Mammary epithelial cell (primary cell): ENCODE measurements at regions of chr7 and their contacts with region 1.

Region 1: GRCh38 chr7:92245487-92246362 is at the starts of genes ANKIB1 and KRIT1:
- DNase-seq: peak; percentile 81
- H3K4me3 ChIP-seq: peak within 1 kb of the TSS; percentile 82 to 88 (median 88)
- H3K27ac ChIP-seq: peak within 1 kb of the TSS; percentile 81
- H3K4me1 ChIP-seq: peaks cover 4% of the 10 kb centered on the region
- H3K27me3 ChIP-seq: no peaks in the 10 kb centered on the region
- CTCF ChIP-seq: peak in 1 of 2 donors; percentile 12
- total RNA-seq, gene ANKIB1: 57.3 to 61.2 TPM
- total RNA-seq, gene KRIT1: 33.5 to 40.2 TPM

Region 2: GRCh38 chr7:92134271-92135051 is 111.3 kb before region 1 on chr7 and contains the start of gene CYP51A1:
- CTCF ChIA-PET with region 1: no interaction called
- dilution Hi-C with region 1: no loop called
- in situ Hi-C with region 1: no loop called
- intact Hi-C with region 1: loop called (anchors 2 kb)
- DNase-seq: peak; percentile 93
- H3K4me3 ChIP-seq: peak within 1 kb of the TSS; percentile 73 to 94 (median 81)
- H3K27ac ChIP-seq: peak within 1 kb of the TSS; percentile 95
- H3K4me1 ChIP-seq: peaks cover 22% of the 10 kb centered on the region
- H3K27me3 ChIP-seq: no peaks in the 10 kb centered on the region
- CTCF ChIP-seq: peak in 1 of 2 donors; percentile 11
- total RNA-seq, gene CYP51A1: 213 to 238 TPM

Region 3: GRCh38 chr7:92313055-92313454 is 67.3 kb after region 1 on chr7:
- CTCF ChIA-PET with region 1: no interaction called
- dilution Hi-C with region 1: no loop called
- in situ Hi-C with region 1: no loop called
- intact Hi-C with region 1: loop called (anchors 5 kb)
- DNase-seq: no peak
- H3K4me3 ChIP-seq: no peak overlapping the region
- H3K27ac ChIP-seq: no peak overlapping the region
- H3K4me1 ChIP-seq: no peaks in the 10 kb centered on the region
- H3K27me3 ChIP-seq: no peaks in the 10 kb centered on the region
- CTCF ChIP-seq: no peak

Region 4: GRCh38 chr7:92343719-92344118 is 98.0 kb after region 1 on chr7:
- CTCF ChIA-PET with region 1: no interaction called
- dilution Hi-C with region 1: no loop called
- in situ Hi-C with region 1: no loop called
- intact Hi-C with region 1: loop called (anchors 10 kb)
- DNase-seq: no peak
- H3K4me3 ChIP-seq: no peak overlapping the region
- H3K27ac ChIP-seq: no peak overlapping the region
- H3K4me1 ChIP-seq: no peaks in the 10 kb centered on the region
- H3K27me3 ChIP-seq: no peaks in the 10 kb centered on the region
- CTCF ChIP-seq: no peak

Region 5: DNA sequence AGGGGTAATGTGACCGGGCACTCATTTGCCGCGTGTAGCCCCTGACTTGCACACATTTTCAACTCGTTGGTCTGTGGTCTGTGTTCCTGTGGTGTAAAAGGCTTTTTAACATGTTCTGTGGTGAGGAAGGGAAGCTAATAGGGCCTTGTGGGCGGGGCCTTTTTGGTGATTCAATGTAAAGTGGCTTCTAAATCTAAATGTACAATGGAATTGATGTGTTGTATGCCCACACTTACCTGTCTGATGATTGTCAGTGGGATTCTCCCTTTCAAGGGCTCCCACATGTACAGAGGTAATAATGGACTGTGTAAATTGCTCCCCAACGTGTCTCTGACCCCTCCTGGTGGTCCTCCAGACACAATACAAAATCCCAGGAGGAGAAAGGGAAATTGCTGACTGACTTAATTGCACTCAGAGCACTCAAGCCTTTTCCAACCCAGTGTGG is 158.5 kb after region 1 on chr7:
- CTCF ChIA-PET with region 1: no interaction called
- dilution Hi-C with region 1: no loop called
- in situ Hi-C with region 1: no loop called
- intact Hi-C with region 1: loop called (anchors 10 kb)
- DNase-seq: no peak
- H3K4me3 ChIP-seq: no peak overlapping the region
- H3K27ac ChIP-seq: no peak overlapping the region
- H3K4me1 ChIP-seq: peaks cover 15% of the 10 kb centered on the region
- H3K27me3 ChIP-seq: no peaks in the 10 kb centered on the region
- CTCF ChIP-seq: no peak